ENCODE measurements at regions of chr20 and their contacts with region 1.

Region 1: DNA sequence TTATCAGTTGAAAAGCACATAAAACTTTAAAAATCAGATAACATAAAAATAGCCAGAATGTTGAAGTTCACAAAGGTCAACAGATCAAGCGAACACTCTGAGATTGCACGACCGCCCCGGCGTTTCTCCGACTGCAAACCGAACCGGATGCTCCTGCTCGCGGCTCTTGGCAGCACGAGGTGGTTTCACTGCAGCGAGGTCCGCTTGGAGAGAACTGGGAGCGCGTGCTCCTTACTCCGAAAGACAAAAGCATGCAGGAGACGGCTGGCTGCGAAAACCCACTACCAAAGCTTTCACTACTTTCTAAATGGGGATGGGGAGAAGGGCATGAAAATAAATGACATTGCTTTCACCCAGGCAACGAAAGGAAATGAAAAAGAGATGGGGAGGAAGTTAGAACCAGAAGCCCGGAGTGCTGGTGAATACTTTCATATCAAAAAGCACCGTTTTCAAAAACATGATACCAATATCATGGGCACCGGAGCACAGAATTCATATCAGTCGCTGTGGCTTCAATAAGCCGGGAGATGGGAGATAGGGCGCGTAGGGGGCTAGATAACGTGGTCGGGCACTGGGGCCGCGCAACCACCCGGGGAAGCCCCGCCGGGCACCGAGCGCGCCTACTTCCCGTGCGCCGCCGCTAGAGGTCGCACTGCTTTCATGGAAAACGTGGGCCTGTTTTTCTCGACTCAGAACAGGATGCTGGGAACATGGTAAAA is 8.3 kb upstream of the ANKRD60 start:
- DNase-seq: peak; percentile 78
- H3K4me3 Mint-ChIP-seq: peak overlapping the region; percentile 88
- H3K27ac Mint-ChIP-seq: peak overlapping the region; percentile 94
- H3K4me1 Mint-ChIP-seq: peaks cover 41% of the 10 kb centered on the region
- H3K27me3 Mint-ChIP-seq: no peaks in the 10 kb centered on the region

Region 2: GRCh38 chr20:58192567-58192966 is 44.2 kb before region 1 on chr20:
- intact Hi-C with region 1: no loop called
- DNase-seq: peak; percentile 14
- H3K4me3 Mint-ChIP-seq: no peak overlapping the region
- H3K27ac Mint-ChIP-seq: no peak overlapping the region
- H3K4me1 Mint-ChIP-seq: no peaks in the 10 kb centered on the region
- H3K27me3 Mint-ChIP-seq: peaks cover 3% of the 10 kb centered on the region

Region 3: DNA sequence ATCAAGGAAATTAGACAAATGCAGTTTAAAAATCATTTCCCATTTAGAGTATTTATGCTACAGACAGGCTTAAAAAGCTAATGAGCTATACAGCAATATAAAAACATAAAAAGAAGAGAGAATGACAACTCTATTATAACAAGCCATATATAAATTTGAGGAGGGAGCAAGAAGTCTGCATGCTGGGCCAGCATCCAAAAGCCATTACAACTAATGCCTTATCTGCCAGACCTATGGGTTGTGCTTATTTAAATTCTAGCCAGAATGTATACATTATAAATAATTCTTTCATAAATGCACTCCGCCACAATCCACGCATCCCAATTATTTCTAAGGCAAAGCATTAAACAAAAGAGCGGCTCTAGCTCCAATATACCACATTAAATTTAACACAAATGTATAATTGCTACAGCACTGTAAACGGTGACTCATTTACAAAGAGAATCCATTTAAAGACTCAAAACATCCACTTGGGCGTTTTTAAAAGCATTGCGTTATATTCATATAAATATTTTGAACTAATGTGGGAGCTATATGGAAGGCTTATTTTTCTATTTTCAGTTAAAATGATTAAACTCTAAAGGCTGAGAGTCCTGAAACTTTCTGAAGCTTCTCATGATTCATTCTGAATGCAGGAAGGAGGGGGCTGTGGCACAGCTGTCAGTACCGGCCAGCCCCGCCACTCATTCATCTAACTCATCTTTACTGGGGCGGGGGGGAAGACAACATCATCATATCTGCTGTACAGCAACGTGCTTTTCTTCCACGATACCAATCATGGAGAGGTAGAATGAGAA is 35.0 kb after region 1 on chr20:
- intact Hi-C with region 1: loop called (anchors 1 kb)
- DNase-seq: no peak
- H3K4me3 Mint-ChIP-seq: no peak overlapping the region
- H3K27ac Mint-ChIP-seq: peak overlapping the region; percentile 64
- H3K4me1 Mint-ChIP-seq: peaks cover 52% of the 10 kb centered on the region
- H3K27me3 Mint-ChIP-seq: no peaks in the 10 kb centered on the region

Region 4: DNA sequence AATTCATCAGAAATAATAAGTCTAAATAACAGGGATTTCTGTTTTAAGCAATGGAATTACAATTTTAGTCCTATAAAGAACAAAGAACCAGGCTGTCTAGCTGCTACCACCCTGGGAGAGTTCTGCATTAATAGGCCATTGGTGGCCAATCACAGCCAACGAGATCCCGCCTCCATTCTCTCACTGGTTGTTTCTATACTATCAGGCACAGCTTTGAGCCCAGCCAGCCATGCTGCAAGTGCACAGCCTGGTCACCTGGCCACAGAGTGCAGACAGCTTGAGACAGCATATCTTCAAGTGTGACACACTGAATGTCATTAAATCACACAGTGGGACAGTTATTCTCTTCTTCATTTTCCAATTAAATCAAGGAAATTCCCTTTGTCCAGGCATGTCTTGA is 56.7 kb after region 1 on chr20:
- intact Hi-C with region 1: no loop called
- DNase-seq: no peak
- H3K4me3 Mint-ChIP-seq: no peak overlapping the region
- H3K27ac Mint-ChIP-seq: no peak overlapping the region
- H3K4me1 Mint-ChIP-seq: peaks cover 12% of the 10 kb centered on the region
- H3K27me3 Mint-ChIP-seq: no peaks in the 10 kb centered on the region

Region 5: DNA sequence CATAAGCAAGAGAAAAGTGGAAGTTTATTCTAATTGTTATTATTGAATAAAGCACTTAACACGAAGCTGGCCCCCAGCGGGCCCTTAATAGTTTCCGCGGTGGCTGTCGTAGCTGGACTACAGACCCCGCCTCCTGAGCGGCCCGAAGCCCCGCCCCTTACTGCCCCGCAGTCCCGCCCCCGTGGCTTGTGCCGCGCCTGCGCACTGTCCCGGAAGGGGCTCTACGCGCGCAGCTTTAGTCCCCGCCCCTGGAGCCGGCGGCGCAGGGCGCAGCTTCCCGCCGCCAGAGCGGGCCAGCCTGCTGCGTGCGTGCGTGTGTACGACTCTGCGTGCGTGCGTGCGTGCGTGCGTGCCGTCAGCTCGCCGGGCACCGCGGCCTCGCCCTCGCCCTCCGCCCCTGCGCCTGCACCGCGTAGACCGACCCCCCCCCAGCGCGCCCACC is 152.1 kb after region 1 on chr20 and contains the start of gene VAPB:
- intact Hi-C with region 1: loop called (anchors 5 kb)
- DNase-seq: peak; percentile 95
- H3K4me3 Mint-ChIP-seq: peak within 1 kb of the TSS; percentile 96
- H3K27ac Mint-ChIP-seq: peak within 1 kb of the TSS; percentile 97
- H3K4me1 Mint-ChIP-seq: peaks cover 35% of the 10 kb centered on the region
- H3K27me3 Mint-ChIP-seq: peaks cover 5% of the 10 kb centered on the region
- total RNA-seq, gene VAPB: 35.6 and 36.2 TPM in 2 replicates

Region 6: GRCh38 chr20:58447511-58448391 is 211.0 kb after region 1 on chr20:
- intact Hi-C with region 1: loop called (anchors 2 kb)
- DNase-seq: peak; percentile 27
- H3K4me3 Mint-ChIP-seq: no peak overlapping the region
- H3K27ac Mint-ChIP-seq: no peak overlapping the region
- H3K4me1 Mint-ChIP-seq: peaks cover 21% of the 10 kb centered on the region
- H3K27me3 Mint-ChIP-seq: no peaks in the 10 kb centered on the region

Measured in activated T-helper 2 cell treated with anti-CD3 and anti-CD28 coated beads, Interferon-gamma antibody, Interleukin-2, Interleukin-4, amounts not matched to agents 10 μg/mL and 5 μg/mL and 100 μg/mL, durations not matched to agents 14 hours and 24 hours and 36 hours (primary cell).